Naive thymus-derived CD4-positive, alpha-beta T cell (primary cell): ENCODE measurements at regions of chr19 and their contacts with region 1.

Region 1: DNA sequence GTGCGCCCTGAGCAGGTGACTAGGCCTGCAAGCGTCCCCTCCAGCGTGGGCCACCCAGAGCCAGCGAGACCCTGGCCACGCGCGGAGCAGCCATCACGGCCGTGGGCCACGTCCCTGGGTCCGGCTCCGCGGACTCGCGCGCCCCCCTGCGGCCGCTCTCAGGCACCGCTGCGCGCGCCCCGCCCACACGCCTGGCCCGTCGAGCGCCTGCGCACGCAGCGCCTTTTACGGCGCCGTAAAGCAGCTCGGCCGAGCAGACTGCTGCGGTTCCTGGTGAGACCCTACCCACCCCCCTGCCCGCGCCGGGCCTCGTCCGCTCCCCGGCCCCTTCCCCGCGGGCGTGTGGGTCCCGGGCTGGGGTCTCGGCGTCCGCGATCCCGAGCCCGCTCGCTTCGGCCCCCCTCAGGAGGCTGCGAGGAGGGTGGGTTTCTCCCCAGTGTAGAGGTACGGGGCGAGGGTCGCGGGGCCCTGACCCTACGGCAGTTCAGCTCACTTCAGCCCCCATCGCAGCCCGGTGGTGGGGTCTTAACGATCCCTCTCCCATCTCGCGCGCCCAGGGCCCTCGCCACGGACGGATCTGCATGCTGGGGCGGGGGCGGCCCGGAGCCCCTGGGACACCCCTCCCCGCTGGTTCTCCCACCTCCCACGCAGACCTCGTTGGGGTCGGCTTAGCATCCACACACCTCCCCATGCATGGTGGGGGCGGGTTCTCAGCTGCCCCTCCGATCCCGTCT is at the start of gene TRAPPC5:
- DNase-seq: peak; percentile 80 to 95 (median 89)
- ATAC-seq: peak; percentile 86
- H3K4me3 ChIP-seq: peak within 1 kb of the TSS; percentile 84
- H3K4me3 Mint-ChIP-seq: peak within 1 kb of the TSS; percentile 83 to 96 (median 91)
- H3K27ac ChIP-seq: peak within 1 kb of the TSS; percentile 91
- H3K27ac Mint-ChIP-seq: peak within 1 kb of the TSS; percentile 54 to 95 (median 93)
- H3K4me1 ChIP-seq: peaks cover 26 to 32% of the 10 kb centered on the region in 2 donors
- H3K4me1 Mint-ChIP-seq: peaks cover 20 to 59% (median 46%) of the 10 kb centered on the region in 7 donors
- H3K27me3 ChIP-seq: peaks cover 0 to 6% of the 10 kb centered on the region in 2 donors
- H3K27me3 Mint-ChIP-seq: peaks cover 3 to 22% (median 8%) of the 10 kb centered on the region in 5 donors
- total RNA-seq, gene TRAPPC5: 43.7 to 79.3 (median 75.4) TPM

Region 2: DNA sequence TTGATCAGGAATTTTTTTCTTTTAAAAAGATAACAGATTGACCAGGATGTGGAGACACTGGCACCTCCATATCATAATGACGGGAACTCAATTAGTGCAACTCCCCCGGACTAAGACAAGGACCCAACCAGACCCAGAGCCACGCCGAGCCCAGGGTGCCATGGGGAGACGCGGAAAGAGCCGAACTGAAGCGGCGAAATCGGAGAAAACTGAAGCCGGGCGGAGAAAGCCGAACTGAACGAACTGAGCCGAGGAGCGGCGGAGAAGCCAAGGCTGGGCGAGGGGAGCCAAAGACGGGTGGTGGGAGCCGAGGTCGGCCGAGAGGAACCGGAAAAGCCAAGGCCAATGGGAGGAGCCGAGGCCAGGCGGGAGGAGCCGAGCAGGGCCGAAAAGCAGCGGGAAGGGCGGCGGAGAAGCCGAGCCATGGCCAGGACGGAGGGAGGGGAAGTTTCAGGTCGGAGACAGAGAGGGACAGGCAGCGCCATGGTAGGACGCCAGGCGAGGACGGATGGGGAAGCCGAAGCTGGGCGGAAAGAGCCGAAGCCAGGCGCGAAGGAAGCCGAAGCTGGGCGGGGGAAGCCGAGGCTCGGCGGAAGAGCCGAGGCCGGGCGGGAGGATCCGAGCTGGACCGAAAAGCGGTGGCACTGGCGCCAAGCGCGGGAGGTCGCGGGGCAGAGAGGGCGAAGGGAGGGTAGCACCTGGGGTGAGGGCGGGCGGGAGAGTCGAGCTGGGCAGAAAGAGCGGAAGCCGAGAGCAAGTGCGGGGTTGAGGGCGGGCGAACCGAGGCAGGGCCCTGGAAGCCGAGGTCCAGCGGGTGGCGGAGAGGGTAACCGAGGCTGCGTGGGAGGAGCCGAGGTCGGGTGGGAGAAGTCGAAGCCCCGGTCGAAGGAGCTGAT is 581.8 kb before region 1 on chr19:
- CTCF ChIA-PET with region 1: no interaction called
- POLR2A ChIA-PET with region 1: no interaction called
- intact Hi-C with region 1: loop called (anchors 1 to 2 kb)
- DNase-seq: peak; percentile 72 to 93 (median 90)
- ATAC-seq: peak; percentile 95
- H3K4me3 ChIP-seq: peak overlapping the region; percentile 98
- H3K4me3 Mint-ChIP-seq: peak overlapping the region; percentile 90 to 97 (median 93)
- H3K27ac ChIP-seq: peak overlapping the region; percentile 79
- H3K27ac Mint-ChIP-seq: peak overlapping the region; percentile 88 to 98 (median 94)
- H3K4me1 ChIP-seq: peaks cover 6 to 17% of the 10 kb centered on the region in 2 donors
- H3K4me1 Mint-ChIP-seq: peaks cover 11 to 41% (median 30%) of the 10 kb centered on the region in 7 donors
- H3K27me3 ChIP-seq: no peaks in the 10 kb centered on the region
- H3K27me3 Mint-ChIP-seq: peaks cover 0 to 8% (median 0%) of the 10 kb centered on the region in 5 donors

Region 3: GRCh38 chr19:7562646-7563393 is 118.0 kb before region 1 on chr19:
- CTCF ChIA-PET with region 1: interaction called, 15 read pairs
- POLR2A ChIA-PET with region 1: interaction called, 4 read pairs
- intact Hi-C with region 1: loop called (anchors 1 kb)
- DNase-seq: peak in 1 of 9 donors; percentile 5
- ATAC-seq: no peak
- H3K4me3 ChIP-seq: no peak overlapping the region
- H3K4me3 Mint-ChIP-seq: no peak overlapping the region
- H3K27ac ChIP-seq: no peak overlapping the region
- H3K27ac Mint-ChIP-seq: no peak overlapping the region
- H3K4me1 ChIP-seq: no peaks in the 10 kb centered on the region
- H3K4me1 Mint-ChIP-seq: peaks cover 0 to 2% (median 0%) of the 10 kb centered on the region in 7 donors
- H3K27me3 ChIP-seq: no peaks in the 10 kb centered on the region
- H3K27me3 Mint-ChIP-seq: no peaks in the 10 kb centered on the region

Region 4: GRCh38 chr19:7652061-7652641 is 28.6 kb before region 1 on chr19:
- CTCF ChIA-PET with region 1: interaction called, 12 read pairs
- POLR2A ChIA-PET with region 1: interaction called, 3 read pairs
- intact Hi-C with region 1: loop called (anchors 1 kb)
- DNase-seq: peak; percentile 77 to 91 (median 85)
- ATAC-seq: peak; percentile 91
- H3K4me3 ChIP-seq: peak overlapping the region; percentile 49
- H3K4me3 Mint-ChIP-seq: peak overlapping the region; percentile 60 to 86 (median 81)
- H3K27ac ChIP-seq: peak overlapping the region; percentile 37
- H3K27ac Mint-ChIP-seq: peak overlapping the region in 6 of 9 donors; percentile 55 to 85 (median 75)
- H3K4me1 ChIP-seq: peaks cover 0 to 7% of the 10 kb centered on the region in 2 donors
- H3K4me1 Mint-ChIP-seq: peaks cover 5 to 15% (median 11%) of the 10 kb centered on the region in 7 donors
- H3K27me3 ChIP-seq: no peaks in the 10 kb centered on the region
- H3K27me3 Mint-ChIP-seq: peaks cover 0 to 6% (median 0%) of the 10 kb centered on the region in 5 donors

Region 5: DNA sequence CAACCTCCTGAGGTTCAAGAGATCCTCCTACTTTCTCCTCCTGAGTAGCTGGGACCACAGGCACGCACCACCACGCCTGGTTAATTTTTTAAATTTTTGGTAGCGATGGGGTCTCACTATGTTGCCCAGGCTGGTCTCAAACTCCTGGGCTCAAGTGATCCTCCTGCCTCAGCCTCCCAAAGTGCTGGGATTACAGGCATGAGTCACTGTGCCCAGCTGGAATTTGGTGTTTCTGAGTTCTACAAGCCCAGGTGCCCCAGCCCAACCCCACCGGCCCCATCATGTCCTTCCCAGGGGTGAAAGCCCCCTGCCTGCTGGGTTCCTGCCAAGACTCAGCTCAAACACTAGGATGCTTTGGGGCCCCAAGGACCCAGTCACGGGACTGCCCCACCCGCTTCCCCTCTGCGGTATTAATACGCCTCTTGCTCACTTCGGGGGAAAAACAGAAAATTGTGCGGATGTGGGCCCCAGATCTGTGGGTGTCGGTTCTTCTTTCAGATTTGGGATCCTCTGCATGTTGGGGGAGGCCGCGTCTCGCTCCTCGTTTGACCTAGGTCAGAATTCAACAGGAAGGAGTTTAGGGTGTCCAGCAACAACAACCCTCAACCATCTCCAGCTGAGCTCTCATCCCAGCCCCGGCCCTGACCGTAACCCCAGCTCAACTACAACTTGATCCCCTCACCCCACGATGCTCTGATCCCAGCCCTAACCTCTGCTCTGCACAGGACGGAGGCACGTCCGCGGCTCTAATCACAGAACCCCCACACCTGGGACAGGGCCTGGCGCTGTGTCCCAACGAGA is 24.8 kb after region 1 on chr19:
- CTCF ChIA-PET with region 1: interaction called, 15 read pairs
- POLR2A ChIA-PET with region 1: interaction called, 16 read pairs
- intact Hi-C with region 1: loop called in 1 of 2 experiments (anchors 1 kb)
- DNase-seq: peak; percentile 47 to 87 (median 79)
- ATAC-seq: peak; percentile 95
- H3K4me3 ChIP-seq: peak overlapping the region; percentile 34
- H3K4me3 Mint-ChIP-seq: peak overlapping the region; percentile 75 to 91 (median 83)
- H3K27ac ChIP-seq: peak overlapping the region; percentile 79
- H3K27ac Mint-ChIP-seq: peak overlapping the region; percentile 88 to 100 (median 97)
- H3K4me1 ChIP-seq: peaks cover 22 to 38% of the 10 kb centered on the region in 2 donors
- H3K4me1 Mint-ChIP-seq: peaks cover 27 to 71% (median 54%) of the 10 kb centered on the region in 7 donors
- H3K27me3 ChIP-seq: no peaks in the 10 kb centered on the region
- H3K27me3 Mint-ChIP-seq: peaks cover 0 to 20% (median 0%) of the 10 kb centered on the region in 5 donors

Region 6: GRCh38 chr19:7725791-7726190 is 45.0 kb after region 1 on chr19:
- CTCF ChIA-PET with region 1: no interaction called
- POLR2A ChIA-PET with region 1: no interaction called
- intact Hi-C with region 1: no loop called
- DNase-seq: no peak
- ATAC-seq: no peak
- H3K4me3 ChIP-seq: no peak overlapping the region
- H3K4me3 Mint-ChIP-seq: no peak overlapping the region
- H3K27ac ChIP-seq: no peak overlapping the region
- H3K27ac Mint-ChIP-seq: peak overlapping the region in 1 of 9 donors; percentile 36
- H3K4me1 ChIP-seq: peaks cover 0 to 16% of the 10 kb centered on the region in 2 donors
- H3K4me1 Mint-ChIP-seq: peaks cover 0 to 15% (median 14%) of the 10 kb centered on the region in 7 donors
- H3K27me3 ChIP-seq: peaks cover 0 to 13% of the 10 kb centered on the region in 2 donors
- H3K27me3 Mint-ChIP-seq: peaks cover 19 to 33% (median 31%) of the 10 kb centered on the region in 5 donors

Region 7: DNA sequence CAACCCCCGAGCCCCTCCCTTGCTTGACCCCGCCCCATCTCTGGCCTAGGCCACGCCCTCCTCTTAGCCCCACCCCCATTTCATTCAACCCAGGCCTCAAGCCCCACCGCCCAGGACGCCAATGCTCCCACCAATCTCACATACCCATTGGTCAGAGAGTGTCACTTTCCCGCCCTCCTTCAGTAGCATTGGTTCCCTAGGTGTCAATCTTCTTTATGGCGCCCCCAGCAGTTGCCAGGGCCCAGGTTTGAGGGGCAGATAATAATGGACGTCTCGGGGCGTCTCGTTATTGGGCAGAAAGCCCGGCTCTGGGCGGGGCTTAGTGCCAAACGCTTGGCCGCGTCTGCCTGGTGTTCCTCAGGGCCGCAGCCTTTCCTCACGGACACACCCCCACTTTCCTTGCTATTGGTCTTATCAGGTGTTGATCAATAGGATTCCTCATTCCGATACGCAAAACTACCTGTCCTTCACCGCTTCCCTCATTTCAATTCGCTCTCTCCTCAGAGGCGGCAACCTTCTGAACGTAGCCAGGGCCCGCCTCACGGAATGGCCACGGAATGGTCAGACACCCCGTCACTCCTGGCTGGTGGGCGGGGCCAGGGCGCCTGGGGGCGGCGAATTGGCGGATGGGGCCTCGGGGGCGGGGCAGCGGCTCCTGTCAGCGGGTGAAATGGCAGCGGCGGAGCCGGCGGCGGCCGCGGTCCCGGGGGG is 148.9 kb after region 1 on chr19 and contains the start of gene EVI5L:
- CTCF ChIA-PET with region 1: interaction called, 4 read pairs
- POLR2A ChIA-PET with region 1: no interaction called
- intact Hi-C with region 1: loop called in 1 of 2 experiments (anchors 1 kb)
- DNase-seq: peak; percentile 99 to 100 (median 99)
- ATAC-seq: peak; percentile 88
- H3K4me3 ChIP-seq: peak within 1 kb of the TSS; percentile 47
- H3K4me3 Mint-ChIP-seq: peak within 1 kb of the TSS; percentile 77 to 88 (median 84)
- H3K27ac ChIP-seq: peak within 1 kb of the TSS; percentile 50
- H3K27ac Mint-ChIP-seq: peak within 1 kb of the TSS; percentile 4 to 94 (median 84)
- H3K4me1 ChIP-seq: peaks cover 5 to 9% of the 10 kb centered on the region in 2 donors
- H3K4me1 Mint-ChIP-seq: peaks cover 5 to 25% (median 23%) of the 10 kb centered on the region in 7 donors
- H3K27me3 ChIP-seq: no peaks in the 10 kb centered on the region
- H3K27me3 Mint-ChIP-seq: peaks cover 0 to 11% (median 0%) of the 10 kb centered on the region in 5 donors
- total RNA-seq, gene EVI5L: 7.4 to 12.2 (median 11.4) TPM

Region 8: DNA sequence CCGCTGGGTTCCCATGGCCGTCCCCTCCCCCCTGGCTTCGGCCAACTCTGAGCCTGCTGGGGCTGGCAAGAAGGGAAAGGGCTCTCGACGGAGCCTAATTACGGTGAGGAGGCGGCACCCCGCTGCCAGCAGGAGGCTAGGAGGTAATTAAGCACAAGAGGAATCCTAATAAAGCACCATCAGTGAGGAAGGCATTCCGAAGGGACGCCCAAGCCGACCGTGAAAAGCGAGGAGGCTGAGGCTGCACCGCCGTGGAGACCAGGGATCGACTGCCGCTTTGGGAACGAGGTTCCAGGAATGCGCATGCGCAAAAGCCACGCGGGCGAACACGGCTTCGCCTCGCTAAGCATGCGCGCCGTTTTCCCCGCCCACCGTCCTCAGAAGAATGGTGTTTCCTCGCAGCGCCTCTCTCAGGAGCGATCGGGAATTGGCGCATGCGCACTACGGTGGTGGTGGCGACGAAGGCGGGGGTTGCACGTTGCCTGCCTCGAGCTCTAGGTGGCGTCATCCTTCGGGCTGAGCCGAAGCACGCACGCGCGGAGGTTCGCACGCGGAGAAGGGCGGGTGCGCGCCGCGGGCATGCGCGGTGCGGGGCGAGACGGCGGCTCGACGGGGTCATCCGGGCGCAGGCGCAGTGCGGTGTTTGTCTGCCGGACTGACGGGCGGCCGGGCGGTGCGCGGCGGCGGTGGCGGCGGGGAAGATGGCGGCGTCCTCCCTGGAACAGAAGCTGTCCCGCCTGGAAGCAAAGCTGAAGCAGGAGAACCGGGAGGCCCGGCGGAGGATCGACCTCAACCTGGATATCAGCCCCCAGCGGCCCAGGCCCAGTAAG is 222.7 kb after region 1 on chr19 and contains the start of gene MAP2K7:
- CTCF ChIA-PET with region 1: no interaction called
- POLR2A ChIA-PET with region 1: no interaction called
- intact Hi-C with region 1: loop called in 1 of 2 experiments (anchors 1 kb)
- DNase-seq: peak; percentile 99 to 100 (median 100)
- ATAC-seq: peak; percentile 91
- H3K4me3 ChIP-seq: peak within 1 kb of the TSS; percentile 91
- H3K4me3 Mint-ChIP-seq: peak within 1 kb of the TSS; percentile 87 to 95 (median 92)
- H3K27ac ChIP-seq: peak within 1 kb of the TSS; percentile 77
- H3K27ac Mint-ChIP-seq: peak within 1 kb of the TSS; percentile 91 to 98 (median 96)
- H3K4me1 ChIP-seq: peaks cover 20 to 24% of the 10 kb centered on the region in 2 donors
- H3K4me1 Mint-ChIP-seq: peaks cover 12 to 37% (median 30%) of the 10 kb centered on the region in 7 donors
- H3K27me3 ChIP-seq: no peaks in the 10 kb centered on the region
- H3K27me3 Mint-ChIP-seq: peaks cover 0 to 3% (median 0%) of the 10 kb centered on the region in 5 donors
- total RNA-seq, gene MAP2K7: 48.7 to 109 (median 66.5) TPM